ENCODE measurements at regions of chr4 and their contacts with region 1.

Region 1: GRCh38 chr4:173370477-173371291 is at the start of gene SAP30:
- DNase-seq: peak; percentile 94 to 98 (median 98)
- ATAC-seq: peak; percentile 86
- H3K4me3 ChIP-seq: peak within 1 kb of the TSS; percentile 96
- H3K4me3 Mint-ChIP-seq: peak within 1 kb of the TSS; percentile 98
- H3K27ac ChIP-seq: peak within 1 kb of the TSS; percentile 58 to 88
- H3K27ac Mint-ChIP-seq: peak within 1 kb of the TSS; percentile 87
- H3K4me1 ChIP-seq: peaks cover 27% of the 10 kb centered on the region
- H3K4me1 Mint-ChIP-seq: peaks cover 37% of the 10 kb centered on the region
- H3K27me3 ChIP-seq: no peaks in the 10 kb centered on the region
- H3K27me3 Mint-ChIP-seq: peaks cover 27% of the 10 kb centered on the region
- CTCF ChIP-seq: no peak
- total RNA-seq, gene SAP30: 2.5 to 3.9 TPM

Region 2: DNA sequence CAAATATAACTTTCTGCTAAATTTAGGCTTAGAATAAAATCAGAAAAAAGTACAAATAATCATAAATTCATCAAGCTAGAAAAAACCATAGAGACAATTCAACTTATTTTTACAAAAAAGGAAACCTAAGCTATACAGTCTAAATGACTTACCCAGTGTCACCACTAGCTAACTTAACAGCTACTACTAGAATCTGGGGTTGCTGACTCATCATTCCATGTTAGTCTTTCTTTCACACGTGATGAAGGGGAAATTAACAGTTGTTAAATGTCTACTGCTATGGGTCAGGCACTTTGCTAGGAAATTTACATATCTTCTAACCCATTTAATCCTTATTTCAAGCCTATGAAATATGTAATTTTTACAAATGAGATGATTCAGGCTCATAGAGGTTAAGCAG is 551.3 kb before region 1 on chr4:
- CTCF ChIA-PET with region 1: no interaction called
- POLR2A ChIA-PET with region 1: no interaction called
- intact Hi-C with region 1: no loop called
- DNase-seq: no peak
- ATAC-seq: no peak
- H3K4me3 ChIP-seq: no peak overlapping the region
- H3K4me3 Mint-ChIP-seq: no peak overlapping the region
- H3K27ac ChIP-seq: no peak overlapping the region
- H3K27ac Mint-ChIP-seq: no peak overlapping the region
- H3K4me1 ChIP-seq: no peaks in the 10 kb centered on the region
- H3K4me1 Mint-ChIP-seq: no peaks in the 10 kb centered on the region
- H3K27me3 ChIP-seq: no peaks in the 10 kb centered on the region
- H3K27me3 Mint-ChIP-seq: peaks cover 8% of the 10 kb centered on the region
- CTCF ChIP-seq: no peak

Region 3: DNA sequence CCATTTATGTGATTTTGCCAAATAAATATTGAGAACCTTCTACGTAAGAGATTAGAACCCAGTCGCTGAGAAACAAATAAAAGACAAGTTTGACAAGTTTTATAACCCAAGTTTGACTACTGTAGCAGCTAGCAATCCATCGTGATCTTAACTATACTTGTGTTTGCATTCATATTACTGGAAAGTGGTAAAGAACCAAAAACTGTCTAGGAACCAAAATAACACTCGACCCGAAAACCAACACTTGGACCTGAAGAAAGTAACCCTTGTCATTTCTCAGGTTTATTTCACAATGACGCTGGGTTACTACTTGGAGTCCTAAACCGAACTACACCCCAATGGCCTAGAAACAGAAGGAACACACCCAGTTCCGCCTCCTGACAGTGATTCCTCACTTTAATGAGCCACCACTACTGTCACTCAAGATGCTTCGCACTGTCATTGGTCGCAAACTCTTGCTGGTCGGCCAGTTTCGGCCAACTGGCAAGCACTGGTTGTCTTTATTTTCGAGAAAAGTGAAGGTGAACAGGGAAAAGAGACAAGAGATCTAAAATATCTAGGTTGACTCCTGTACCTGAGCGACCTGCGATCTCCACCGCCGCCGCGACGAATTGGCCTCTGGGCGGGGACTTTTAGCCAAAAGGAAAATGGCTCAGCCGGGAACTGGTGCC is 912.3 kb after region 1 on chr4:
- CTCF ChIA-PET with region 1: no interaction called
- POLR2A ChIA-PET with region 1: interaction called, 8 read pairs
- intact Hi-C with region 1: loop called in 1 of 2 experiments (anchors 2 kb)
- DNase-seq: peak in 13 of 14 experiments; percentile 57 to 93 (median 68)
- ATAC-seq: peak; percentile 92
- H3K4me3 ChIP-seq: peak overlapping the region; percentile 91
- H3K4me3 Mint-ChIP-seq: peak overlapping the region; percentile 95
- H3K27ac ChIP-seq: peak overlapping the region; percentile 95 to 99
- H3K27ac Mint-ChIP-seq: peak overlapping the region; percentile 99
- H3K4me1 ChIP-seq: peaks cover 11% of the 10 kb centered on the region
- H3K4me1 Mint-ChIP-seq: peaks cover 90% of the 10 kb centered on the region
- H3K27me3 ChIP-seq: no peaks in the 10 kb centered on the region
- H3K27me3 Mint-ChIP-seq: no peaks in the 10 kb centered on the region
- CTCF ChIP-seq: no peak

Measured in CD4-positive, alpha-beta T cell (primary cell).